Panc1 (cell line): ENCODE measurements at regions of chr1 and their contacts with region 1.

Region 1: GRCh38 chr1:152621993-152622392 is 910 bp downstream of the LCE3A start:
- DNase-seq: no peak
- ATAC-seq: no peak
- H3K4me3 ChIP-seq: no peak overlapping the region
- H3K27ac ChIP-seq: no peak overlapping the region
- H3K4me1 ChIP-seq: no peaks in the 10 kb centered on the region
- H3K27me3 ChIP-seq: no peaks in the 10 kb centered on the region
- CTCF ChIP-seq: no peak

Region 2: GRCh38 chr1:152577168-152577567 is 44.8 kb before region 1 on chr1:
- CTCF ChIA-PET with region 1: no interaction called
- POLR2A ChIA-PET with region 1: no interaction called
- in situ Hi-C with region 1: no loop called
- intact Hi-C with region 1: loop called (anchors 2 kb)
- DNase-seq: no peak
- ATAC-seq: no peak
- H3K4me3 ChIP-seq: no peak overlapping the region
- H3K27ac ChIP-seq: no peak overlapping the region
- H3K4me1 ChIP-seq: no peaks in the 10 kb centered on the region
- H3K27me3 ChIP-seq: no peaks in the 10 kb centered on the region
- CTCF ChIP-seq: no peak